Dendritic cell treated with granulocyte-macrophage colony-stimulating factor and Interleukin-4, amounts not matched to agents 40 ng/mL and 50 ng/mL, for 4 days (primary cell): ENCODE measurements at regions of chr7 and their contacts with region 1.

Region 1: GRCh38 chr7:3300651-3301378 is at the start of gene SDK1:
- H3K4me3 Mint-ChIP-seq: peak within 1 kb of the TSS; percentile 66
- H3K27ac Mint-ChIP-seq: no peak within 1 kb of the TSS
- H3K4me1 Mint-ChIP-seq: peaks cover 7% of the 10 kb centered on the region
- H3K27me3 Mint-ChIP-seq: peaks cover 52% of the 10 kb centered on the region

Region 2: DNA sequence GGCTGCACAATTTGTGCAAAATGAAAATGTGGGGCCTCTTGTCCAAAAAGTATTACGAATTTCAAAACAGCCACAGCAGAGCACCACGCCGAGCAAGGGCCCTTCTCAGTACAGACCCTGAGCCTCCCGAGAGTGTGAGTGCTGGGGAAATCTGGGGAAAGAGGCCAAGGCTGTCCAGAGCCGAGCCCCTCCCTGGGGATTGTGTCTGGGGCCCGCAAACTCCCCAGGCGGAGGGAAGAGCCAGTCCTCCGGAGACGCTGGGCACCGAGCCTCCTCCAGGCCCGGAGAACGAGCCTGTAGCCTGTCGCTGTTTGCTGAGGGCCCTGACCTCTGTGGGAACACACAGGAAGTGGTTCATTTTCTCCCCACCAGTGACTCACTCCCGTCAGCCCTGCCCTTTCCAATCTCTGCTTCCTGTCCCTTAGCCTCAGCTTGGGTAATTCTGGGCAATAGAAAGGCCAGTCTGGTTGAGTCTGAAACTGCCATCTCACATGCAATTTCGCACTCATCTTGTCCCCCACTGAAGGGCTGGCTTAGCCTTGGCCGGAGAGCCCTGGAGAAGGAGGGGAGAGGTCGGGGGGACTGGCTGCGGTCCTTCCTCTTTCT is 437.3 kb before region 1 on chr7:
- intact Hi-C with region 1: loop called (anchors 10 kb)
- H3K4me3 Mint-ChIP-seq: peak overlapping the region; percentile 74
- H3K27ac Mint-ChIP-seq: peak overlapping the region; percentile 98
- H3K4me1 Mint-ChIP-seq: peaks cover 29% of the 10 kb centered on the region
- H3K27me3 Mint-ChIP-seq: peaks cover 34% of the 10 kb centered on the region